Heart left ventricle (tissue), 16 donors: ENCODE measurements at regions of chr9 and their contacts with region 1.

Region 1: DNA sequence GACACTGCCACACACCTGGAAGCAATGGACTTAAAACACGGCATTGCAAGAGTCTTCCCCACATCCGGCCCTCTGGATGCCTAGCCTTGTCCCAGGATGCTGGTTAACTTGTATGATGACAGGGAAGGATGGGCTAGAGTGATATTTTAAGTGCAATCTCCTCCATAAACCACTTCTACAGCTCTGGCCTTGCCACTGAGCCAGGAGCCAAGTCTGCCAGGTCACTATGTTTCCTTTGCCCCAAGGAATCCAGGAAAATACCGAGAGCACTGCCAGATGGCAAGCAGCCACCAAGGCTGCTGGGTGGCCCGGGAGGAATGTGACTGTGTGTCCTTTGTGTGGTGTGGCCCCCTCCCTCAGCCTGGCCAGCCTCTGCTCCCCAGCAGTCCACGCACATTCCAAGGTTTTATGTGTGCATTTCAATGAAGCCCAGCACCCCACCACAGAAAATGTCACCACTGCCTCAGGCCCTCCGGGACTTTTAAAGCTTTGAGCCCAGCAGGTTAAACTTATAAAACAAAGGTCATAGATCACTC is 106.0 kb downstream of the FRMD3 start:
- DNase-seq: peak; percentile 61 to 87 (median 86)
- ATAC-seq: peak; percentile 91 to 94 (median 92)
- H3K4me3 ChIP-seq: no peak overlapping the region
- H3K27ac ChIP-seq: peak overlapping the region in 9 of 12 donors; percentile 16 to 69 (median 49)
- H3K4me1 ChIP-seq: peaks cover 0 to 54% (median 24%) of the 10 kb centered on the region in 12 donors
- H3K27me3 ChIP-seq: no peaks in the 10 kb centered on the region
- CTCF ChIP-seq: no peak
- POLR2A ChIP-seq: no peak

Region 2: GRCh38 chr9:83473488-83473971 is 41.4 kb after region 1 on chr9:
- intact Hi-C with region 1: loop called in 2 of 10 experiments (anchors 5 kb)
- DNase-seq: no peak
- ATAC-seq: peak in 1 of 4 donors; percentile 32
- H3K4me3 ChIP-seq: peak overlapping the region in 8 of 12 donors; percentile 8 to 44 (median 24)
- H3K27ac ChIP-seq: peak overlapping the region; percentile 7 to 88 (median 76)
- H3K4me1 ChIP-seq: peaks cover 3 to 58% (median 27%) of the 10 kb centered on the region in 12 donors
- H3K27me3 ChIP-seq: no peaks in the 10 kb centered on the region
- CTCF ChIP-seq: no peak
- POLR2A ChIP-seq: no peak